Common myeloid progenitor, CD34-positive (primary cell): ENCODE measurements at regions of chr2 and their contacts with region 1.

Region 1: DNA sequence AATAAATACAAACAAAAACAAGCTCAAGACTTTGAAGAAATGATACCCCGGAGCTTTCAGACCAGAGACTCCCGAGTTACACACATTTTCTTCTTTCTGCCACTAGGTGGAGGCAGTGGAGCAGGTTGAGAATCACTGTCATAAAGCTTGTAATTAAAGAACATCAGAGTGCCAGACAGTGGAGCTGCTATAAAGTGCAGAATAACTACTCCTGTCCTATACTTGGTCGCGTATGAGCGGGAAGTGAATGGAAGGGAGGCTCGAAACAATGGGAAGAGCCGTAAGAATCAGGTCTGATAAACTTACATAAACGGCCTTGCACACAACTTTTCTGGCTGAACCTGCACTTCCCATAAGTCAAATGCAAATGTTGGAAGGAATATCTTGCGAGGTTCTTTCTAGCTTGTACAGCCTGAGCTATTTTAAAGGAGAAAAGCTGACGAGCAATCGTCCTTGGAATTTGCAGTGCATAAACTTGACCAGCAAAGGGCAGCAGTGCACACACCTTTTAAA is 189.0 kb downstream of the RPIA start:
- DNase-seq: peak; percentile 84 to 90 (median 88)
- H3K4me3 ChIP-seq: peak overlapping the region in 6 of 7 experiments; percentile 40 to 77 (median 61)
- H3K27ac ChIP-seq: no peak overlapping the region
- H3K4me1 ChIP-seq: peaks cover 9 to 20% (median 12%) of the 10 kb centered on the region in 4 experiments
- H3K27me3 ChIP-seq: no peaks in the 10 kb centered on the region

Region 2: DNA sequence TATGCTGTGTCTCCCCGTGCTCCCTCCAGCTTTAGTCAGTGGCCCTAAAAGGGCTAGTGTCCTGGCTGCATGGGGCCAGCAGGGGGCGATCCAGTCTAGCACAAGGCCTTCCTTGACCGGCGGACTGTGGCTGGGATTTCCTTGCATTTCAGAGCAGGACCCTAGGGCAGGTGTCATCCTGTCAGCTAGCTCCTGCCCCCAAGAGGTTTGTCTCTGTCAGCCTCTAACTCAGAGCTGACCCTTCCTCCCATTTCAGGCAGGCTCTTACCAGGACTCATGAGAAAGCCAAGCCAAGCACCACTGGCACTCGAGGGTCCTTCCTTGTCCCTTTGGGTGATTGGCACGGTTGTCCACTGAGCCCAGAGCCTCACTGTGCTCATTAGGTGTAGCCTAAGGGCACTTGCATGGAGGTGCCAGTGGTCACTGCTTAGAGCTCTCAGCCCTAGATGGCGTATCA is 48.7 kb before region 1 on chr2:
- CTCF ChIA-PET with region 1: interaction called, 71 read pairs
- POLR2A ChIA-PET with region 1: no interaction called
- DNase-seq: peak; percentile 28 to 64 (median 51)
- H3K4me3 ChIP-seq: no peak overlapping the region
- H3K27ac ChIP-seq: no peak overlapping the region
- H3K4me1 ChIP-seq: peaks cover 0 to 9% (median 7%) of the 10 kb centered on the region in 4 experiments
- H3K27me3 ChIP-seq: no peaks in the 10 kb centered on the region

Region 3: DNA sequence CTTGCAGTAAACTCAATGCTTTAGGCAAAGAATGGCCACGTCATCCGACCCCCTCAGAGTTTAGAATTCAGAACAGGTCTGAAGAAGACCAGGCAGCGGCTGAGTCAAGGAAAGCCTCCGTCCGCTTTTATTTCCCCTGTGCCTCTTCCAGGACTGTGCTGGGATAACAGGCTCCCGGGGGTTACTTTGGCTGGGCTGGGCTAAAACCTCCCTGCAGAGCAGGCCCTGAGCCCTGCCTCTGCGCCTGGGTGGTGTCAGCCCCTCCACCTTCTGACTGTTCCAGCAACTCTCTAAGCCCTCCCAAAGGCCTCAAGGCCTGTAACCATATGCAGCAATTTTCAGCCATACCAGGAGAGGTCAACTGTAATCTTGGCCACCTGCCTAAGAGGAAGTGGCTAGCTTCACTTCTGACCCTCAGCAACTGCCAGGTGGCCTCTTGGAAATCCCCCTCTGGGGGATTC is 22.5 kb before region 1 on chr2:
- CTCF ChIA-PET with region 1: interaction called, 12 read pairs
- POLR2A ChIA-PET with region 1: no interaction called
- DNase-seq: peak; percentile 44 to 90 (median 89)
- H3K4me3 ChIP-seq: no peak overlapping the region
- H3K27ac ChIP-seq: peak overlapping the region in 1 of 2 experiments; percentile 65
- H3K4me1 ChIP-seq: peaks cover 2 to 27% (median 14%) of the 10 kb centered on the region in 4 experiments
- H3K27me3 ChIP-seq: no peaks in the 10 kb centered on the region

Region 4: GRCh38 chr2:88897715-88898114 is 17.2 kb after region 1 on chr2:
- CTCF ChIA-PET with region 1: interaction called, 37 read pairs
- POLR2A ChIA-PET with region 1: no interaction called
- DNase-seq: peak; percentile 31 to 58 (median 54)
- H3K4me3 ChIP-seq: no peak overlapping the region
- H3K27ac ChIP-seq: no peak overlapping the region
- H3K4me1 ChIP-seq: peaks cover 0 to 21% (median 8%) of the 10 kb centered on the region in 4 experiments
- H3K27me3 ChIP-seq: no peaks in the 10 kb centered on the region

Region 5: GRCh38 chr2:88919087-88919738 is 38.7 kb after region 1 on chr2:
- CTCF ChIA-PET with region 1: interaction called, 19 read pairs
- POLR2A ChIA-PET with region 1: no interaction called
- DNase-seq: peak; percentile 48 to 73 (median 71)
- H3K4me3 ChIP-seq: no peak overlapping the region
- H3K27ac ChIP-seq: no peak overlapping the region
- H3K4me1 ChIP-seq: no peaks in the 10 kb centered on the region
- H3K27me3 ChIP-seq: no peaks in the 10 kb centered on the region